ENCODE measurements at regions of chr12 and their contacts with region 1.

Region 1: GRCh38 chr12:96985480-96986362 is 78.7 kb downstream of the NEDD1 start:
- DNase-seq: peak; percentile 76
- CTCF ChIP-seq: peak; percentile 96

Region 2: DNA sequence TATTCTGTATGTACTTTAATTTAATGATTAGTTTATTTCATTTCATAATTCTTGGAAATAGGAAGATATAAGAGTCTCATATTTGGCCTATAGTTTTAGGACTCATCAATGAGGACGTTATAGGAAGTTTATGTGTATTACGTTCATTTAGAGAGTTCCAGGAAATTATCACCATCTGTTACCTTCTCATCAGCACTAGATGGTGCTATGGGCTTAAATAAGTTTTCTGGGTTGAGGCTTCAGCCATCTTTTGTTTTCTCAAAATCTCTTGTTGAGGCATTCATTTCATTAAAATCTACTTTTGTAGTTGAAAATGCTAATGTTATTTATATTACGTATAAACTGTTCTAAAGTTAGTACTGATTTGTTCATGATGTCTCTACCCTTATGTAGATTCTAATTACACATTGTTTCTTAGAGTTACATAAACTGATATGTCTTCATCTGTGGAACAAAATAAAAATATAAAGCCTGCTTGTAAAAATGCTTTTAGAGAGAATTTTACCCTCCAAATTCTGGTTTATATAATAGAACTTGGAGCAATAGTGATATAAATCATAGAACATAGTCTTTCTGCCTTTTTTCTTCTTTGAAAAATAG is 407.1 kb before region 1 on chr12:
- in situ Hi-C with region 1: loop called (anchors 25 kb)
- DNase-seq: peak; percentile 44
- CTCF ChIP-seq: peak; percentile 70

Region 3: DNA sequence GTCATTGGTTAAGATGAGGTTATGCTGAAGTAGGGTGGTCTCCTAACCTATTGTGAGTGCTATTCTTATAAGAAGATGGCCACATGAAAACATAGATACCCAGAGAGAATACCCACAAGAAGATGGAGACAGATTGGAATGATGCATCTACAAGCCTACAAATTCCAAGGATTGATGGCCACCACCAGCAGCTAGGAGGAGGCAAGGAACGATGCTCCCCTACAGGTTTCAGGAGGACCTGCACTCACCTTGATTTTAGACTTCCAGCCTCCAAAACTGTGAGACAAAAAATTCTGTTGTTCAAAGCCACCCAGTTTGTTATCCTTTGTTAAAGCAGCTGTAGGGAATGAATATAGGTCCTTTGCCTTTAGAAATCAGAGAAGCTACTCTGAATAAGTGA is 148.8 kb after region 1 on chr12:
- in situ Hi-C with region 1: no loop called
- DNase-seq: no peak
- CTCF ChIP-seq: no peak

Region 4: GRCh38 chr12:97960754-97961608 is 975.3 kb after region 1 on chr12:
- in situ Hi-C with region 1: loop called (anchors 25 kb)
- DNase-seq: peak; percentile 17
- CTCF ChIP-seq: peak; percentile 76

Region 5: DNA sequence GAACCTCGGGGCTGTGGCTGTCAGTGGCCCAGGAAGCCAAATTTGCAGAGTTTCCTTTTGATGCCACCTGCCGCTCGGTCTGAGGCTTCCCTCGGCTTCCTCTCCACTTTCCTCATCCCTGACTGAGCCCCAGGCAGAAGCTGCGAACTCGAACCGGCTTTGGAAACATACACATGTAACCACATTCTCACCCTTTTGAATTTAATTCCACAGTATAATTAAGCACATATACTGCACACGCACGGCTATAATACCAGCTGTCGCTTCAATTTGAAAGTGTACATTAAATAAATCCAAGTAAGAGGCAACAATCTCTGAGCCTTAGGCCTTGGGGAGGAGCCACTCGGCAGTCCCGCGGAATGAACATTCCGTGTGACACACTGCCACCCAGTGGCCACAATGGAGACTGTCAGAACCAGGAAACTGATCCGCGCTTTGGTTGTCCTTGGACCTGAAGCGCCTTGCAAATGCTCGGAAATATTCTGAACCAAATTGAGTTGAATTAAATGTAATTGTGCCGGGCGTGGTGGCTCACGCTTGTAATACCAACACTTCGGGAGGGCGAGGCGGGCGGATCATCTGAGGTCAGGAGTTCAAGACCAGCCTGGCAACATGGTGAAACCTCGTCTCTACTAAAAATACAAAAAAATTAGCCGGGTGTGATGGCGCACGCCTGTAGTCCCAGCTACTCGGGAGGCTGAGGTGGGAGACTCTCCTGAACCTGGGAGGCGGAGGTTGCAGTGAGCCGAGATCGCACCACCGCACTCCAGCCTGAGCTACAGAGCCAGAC is 1411.8 kb after region 1 on chr12:
- in situ Hi-C with region 1: loop called (anchors 25 kb)
- DNase-seq: peak; percentile 71
- CTCF ChIP-seq: peak; percentile 90

Measured in GM13977 (cell line).